A673 (cell line): ENCODE measurements at regions of chr1 and their contacts with region 1.

Region 1: DNA sequence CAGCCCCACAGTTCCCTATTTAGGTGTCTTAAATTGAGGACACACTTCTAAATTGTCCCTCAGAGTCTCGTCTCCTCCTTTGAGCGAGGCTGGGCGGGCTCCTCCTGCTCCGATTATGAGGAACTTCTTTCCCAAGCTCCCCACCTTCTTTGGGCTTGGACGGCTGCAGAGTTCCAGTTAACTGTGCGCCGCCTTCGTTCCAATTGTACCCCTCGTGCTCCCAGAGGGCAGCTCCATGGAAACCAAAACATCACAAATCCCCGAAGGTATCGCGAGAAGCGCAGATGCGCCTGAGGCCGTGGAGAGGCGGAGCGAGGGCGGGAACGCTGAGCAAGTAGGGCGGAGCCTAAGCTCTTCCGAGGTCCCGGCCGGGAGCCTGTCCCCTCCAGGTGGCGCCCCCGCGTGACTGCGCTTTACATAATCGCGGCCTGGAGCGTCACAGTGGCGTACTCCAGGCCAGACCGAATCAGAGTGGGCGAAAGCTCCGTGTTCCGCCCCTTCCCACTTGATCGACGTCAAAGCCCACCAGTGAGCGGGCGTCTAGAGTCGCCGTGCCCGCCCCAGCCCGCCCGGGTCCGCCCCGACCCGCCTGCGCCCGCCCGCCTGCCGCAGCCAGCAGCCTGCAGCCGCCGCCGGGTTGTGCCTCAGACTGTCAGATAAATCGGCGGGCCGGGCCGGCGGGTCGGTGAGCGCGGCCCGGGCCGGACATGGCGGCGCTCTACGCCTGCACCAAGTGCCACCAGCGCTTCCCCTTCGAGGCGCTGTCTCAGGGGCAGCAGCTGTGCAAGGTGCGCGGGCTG is at the start of gene FAM76A:
- DNase-seq: peak; percentile 99
- H3K4me3 ChIP-seq: peak within 1 kb of the TSS; percentile 99
- H3K27ac ChIP-seq: peak within 1 kb of the TSS; percentile 88
- H3K4me1 ChIP-seq: peaks cover 8% of the 10 kb centered on the region
- H3K27me3 ChIP-seq: no peaks in the 10 kb centered on the region
- CTCF ChIP-seq: peak; percentile 61
- total RNA-seq, gene FAM76A: 15.6 and 17.9 TPM in 2 replicates

Region 2: DNA sequence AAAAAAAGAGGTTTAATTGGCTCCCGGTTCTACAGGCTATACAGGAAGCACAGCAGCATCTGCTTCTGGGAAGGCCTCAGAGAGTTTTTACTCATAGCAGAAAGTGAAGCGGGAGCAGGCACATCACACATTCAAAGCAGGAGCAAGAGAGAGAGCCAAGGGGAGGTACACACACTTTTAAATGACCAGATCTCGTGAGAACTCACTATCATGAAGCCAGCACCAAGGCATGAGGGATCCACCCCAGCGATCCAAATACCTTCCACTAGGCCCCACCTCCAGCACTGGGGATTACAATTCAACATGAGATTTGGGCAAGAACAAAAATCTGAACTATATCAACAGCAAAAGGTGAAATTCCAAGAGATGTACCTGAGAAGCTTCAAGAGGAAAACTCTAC is 20.6 kb before region 1 on chr1:
- CTCF ChIA-PET with region 1: no interaction called
- POLR2A ChIA-PET with region 1: no interaction called
- intact Hi-C with region 1: no loop called
- DNase-seq: no peak
- H3K4me3 ChIP-seq: no peak overlapping the region
- H3K27ac ChIP-seq: no peak overlapping the region
- H3K4me1 ChIP-seq: no peaks in the 10 kb centered on the region
- H3K27me3 ChIP-seq: no peaks in the 10 kb centered on the region
- CTCF ChIP-seq: no peak

Region 3: GRCh38 chr1:27752360-27752759 is 26.8 kb after region 1 on chr1:
- CTCF ChIA-PET with region 1: interaction called, 11 read pairs
- POLR2A ChIA-PET with region 1: no interaction called
- intact Hi-C with region 1: no loop called
- DNase-seq: peak; percentile 4
- H3K4me3 ChIP-seq: no peak overlapping the region
- H3K27ac ChIP-seq: no peak overlapping the region
- H3K4me1 ChIP-seq: no peaks in the 10 kb centered on the region
- H3K27me3 ChIP-seq: no peaks in the 10 kb centered on the region
- CTCF ChIP-seq: no peak

Region 4: DNA sequence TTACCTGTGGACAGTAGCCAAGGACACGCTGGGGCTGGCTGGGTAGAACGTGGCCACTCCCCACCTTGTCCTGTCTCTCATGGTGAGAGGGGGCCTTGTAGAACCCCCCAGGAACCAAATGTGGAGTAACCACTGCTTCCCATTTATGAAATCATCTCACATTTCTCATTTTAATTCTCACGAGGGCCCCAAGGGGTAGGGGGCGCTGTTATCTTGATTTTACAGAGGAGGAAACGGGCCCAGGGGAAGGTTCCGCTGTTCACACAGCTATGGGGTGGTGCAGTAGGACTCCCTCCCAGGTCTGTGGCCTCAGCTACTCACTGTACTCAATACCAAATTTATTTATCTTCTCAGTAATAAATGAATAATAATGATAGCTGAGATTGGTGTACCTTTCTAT is 214.7 kb after region 1 on chr1:
- CTCF ChIA-PET with region 1: no interaction called
- POLR2A ChIA-PET with region 1: no interaction called
- intact Hi-C with region 1: no loop called
- DNase-seq: peak; percentile 61
- H3K4me3 ChIP-seq: no peak overlapping the region
- H3K27ac ChIP-seq: no peak overlapping the region
- H3K4me1 ChIP-seq: peaks cover 4% of the 10 kb centered on the region
- H3K27me3 ChIP-seq: no peaks in the 10 kb centered on the region
- CTCF ChIP-seq: peak; percentile 66